Heart right ventricle (tissue), 16 donors: ENCODE measurements at regions of chr9 and their contacts with region 1.

Region 1: GRCh38 chr9:131704141-131704983 is 35.5 kb downstream of the RAPGEF1 start:
- DNase-seq: no peak
- ATAC-seq: no peak
- H3K4me3 ChIP-seq: peak overlapping the region in 6 of 10 donors; percentile 2 to 54 (median 52)
- H3K27ac ChIP-seq: peak overlapping the region in 9 of 10 donors; percentile 15 to 91 (median 84)
- H3K4me1 ChIP-seq: peaks cover 9 to 100% (median 71%) of the 10 kb centered on the region in 9 donors
- H3K27me3 ChIP-seq: no peaks in the 10 kb centered on the region
- CTCF ChIP-seq: no peak

Region 2: GRCh38 chr9:131657890-131658752 is 46.2 kb before region 1 on chr9:
- intact Hi-C with region 1: no loop called
- DNase-seq: no peak
- ATAC-seq: peak in 1 of 8 donors; percentile 47
- H3K4me3 ChIP-seq: no peak overlapping the region
- H3K27ac ChIP-seq: peak overlapping the region in 7 of 10 donors; percentile 13 to 91 (median 53)
- H3K4me1 ChIP-seq: peaks cover 11 to 100% (median 89%) of the 10 kb centered on the region in 9 donors
- H3K27me3 ChIP-seq: no peaks in the 10 kb centered on the region
- CTCF ChIP-seq: no peak

Region 3: GRCh38 chr9:131678499-131679111 is 25.8 kb before region 1 on chr9:
- intact Hi-C with region 1: loop called in 2 of 10 experiments (anchors 1 to 5 kb)
- DNase-seq: peak; percentile 66 to 69
- ATAC-seq: peak; percentile 76 to 98 (median 87)
- H3K4me3 ChIP-seq: peak overlapping the region in 1 of 10 donors; percentile 1
- H3K27ac ChIP-seq: peak overlapping the region; percentile 70 to 91 (median 82)
- H3K4me1 ChIP-seq: peaks cover 37 to 100% (median 92%) of the 10 kb centered on the region in 9 donors
- H3K27me3 ChIP-seq: no peaks in the 10 kb centered on the region
- CTCF ChIP-seq: no peak